ENCODE measurements at regions of chr14 and their contacts with region 1.

Region 1: DNA sequence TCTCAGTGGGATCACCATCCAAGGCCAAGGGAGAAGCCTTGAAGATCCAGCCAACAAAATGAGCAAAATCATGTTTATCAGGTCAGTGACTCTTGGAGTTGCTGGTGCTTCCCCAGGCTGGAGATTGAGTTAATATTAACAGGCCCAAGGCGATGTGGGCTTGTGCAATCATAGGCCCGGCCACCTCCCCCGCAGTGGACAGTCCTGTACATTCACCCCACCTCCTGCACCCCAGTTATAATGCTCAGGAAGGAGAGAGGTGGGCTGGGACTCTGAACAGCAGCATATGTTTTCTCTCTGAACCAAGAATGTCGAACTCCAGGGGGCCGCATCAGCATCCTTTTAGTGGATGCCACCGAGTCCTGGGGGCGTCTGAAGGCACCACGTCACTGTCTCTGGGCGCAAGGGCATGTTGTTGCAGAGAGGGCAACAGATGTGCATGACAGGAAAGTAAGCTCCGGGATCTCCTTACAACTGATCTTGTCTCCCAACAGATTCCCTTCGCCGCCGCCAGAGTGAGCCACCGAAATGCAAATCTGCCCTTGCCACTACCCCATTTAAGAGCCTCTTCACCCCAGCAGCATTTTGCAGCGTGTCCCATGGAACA is 32.2 kb upstream of the SERPINA6 start:
- DNase-seq: peak; percentile 51 to 71 (median 51)
- H3K4me3 ChIP-seq: no peak overlapping the region
- H3K4me3 Mint-ChIP-seq: peak overlapping the region in 1 of 2 donors; percentile 14
- H3K27ac ChIP-seq: no peak overlapping the region
- H3K27ac Mint-ChIP-seq: peak overlapping the region in 1 of 7 donors; percentile 5
- H3K4me1 ChIP-seq: peaks cover 0 to 2% of the 10 kb centered on the region in 2 donors
- H3K4me1 Mint-ChIP-seq: peaks cover 8% of the 10 kb centered on the region
- H3K27me3 ChIP-seq: peaks cover 21 to 23% of the 10 kb centered on the region in 2 donors
- H3K27me3 Mint-ChIP-seq: peaks cover 15 to 32% (median 19%) of the 10 kb centered on the region in 3 donors
- CTCF ChIP-seq: peak; percentile 80

Region 2: GRCh38 chr14:93619176-93619793 is 736.0 kb before region 1 on chr14:
- intact Hi-C with region 1: no loop called
- DNase-seq: peak; percentile 6 to 28 (median 20)
- H3K4me3 ChIP-seq: no peak overlapping the region
- H3K4me3 Mint-ChIP-seq: no peak overlapping the region
- H3K27ac ChIP-seq: no peak overlapping the region
- H3K27ac Mint-ChIP-seq: no peak overlapping the region
- H3K4me1 ChIP-seq: no peaks in the 10 kb centered on the region
- H3K4me1 Mint-ChIP-seq: no peaks in the 10 kb centered on the region
- H3K27me3 ChIP-seq: no peaks in the 10 kb centered on the region
- H3K27me3 Mint-ChIP-seq: peaks cover 0 to 7% (median 7%) of the 10 kb centered on the region in 3 donors
- CTCF ChIP-seq: peak; percentile 68

Region 3: DNA sequence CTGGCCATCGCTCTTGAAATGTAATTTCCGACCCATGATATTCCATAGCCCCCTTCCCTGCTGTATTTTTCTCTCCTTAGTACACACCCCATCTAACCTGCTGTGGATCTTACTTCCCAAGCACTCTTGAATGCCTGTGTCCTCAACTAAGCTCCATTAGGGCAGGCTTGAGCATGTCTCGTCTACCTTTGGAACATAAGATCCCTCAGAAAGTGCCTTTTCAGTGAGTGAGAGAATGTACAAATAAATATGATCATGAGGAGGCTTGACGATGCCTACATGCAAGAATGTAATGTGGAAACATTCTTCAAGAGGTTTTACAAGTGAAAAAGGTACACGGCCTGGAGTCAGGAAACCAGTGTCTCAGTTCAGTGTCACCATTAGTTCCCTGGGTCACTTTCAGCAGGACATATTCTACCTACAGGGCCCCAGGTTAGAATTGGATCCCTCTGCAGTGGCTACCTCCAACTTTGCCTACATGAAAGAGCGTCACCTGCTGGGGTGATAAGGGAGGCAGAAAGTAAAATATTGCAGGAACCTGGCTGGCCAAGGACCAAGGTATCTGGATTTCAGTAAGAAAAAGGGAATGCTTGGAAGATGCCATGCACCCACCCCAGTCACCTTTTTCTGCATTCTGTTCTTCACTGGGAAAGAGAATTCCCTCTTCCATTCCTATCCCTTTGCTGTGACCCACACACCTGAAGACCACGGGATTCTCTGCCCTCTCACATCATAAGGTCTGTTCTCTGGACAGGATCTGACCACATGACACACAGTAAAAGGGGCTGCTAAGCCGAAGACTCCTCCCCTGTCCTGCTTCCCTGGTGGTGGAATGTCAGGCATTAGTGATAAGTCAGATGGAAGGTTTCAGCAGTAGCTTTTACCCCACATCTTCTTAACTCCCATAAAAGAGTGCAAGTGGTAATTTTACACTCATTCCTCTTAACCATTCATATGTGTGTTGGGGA is 57.7 kb after region 1 on chr14:
- intact Hi-C with region 1: loop called (anchors 2 to 5 kb)
- DNase-seq: peak in 2 of 3 donors; percentile 42 to 45
- H3K4me3 ChIP-seq: no peak overlapping the region
- H3K4me3 Mint-ChIP-seq: peak overlapping the region in 1 of 2 donors; percentile 23
- H3K27ac ChIP-seq: no peak overlapping the region
- H3K27ac Mint-ChIP-seq: no peak overlapping the region
- H3K4me1 ChIP-seq: peaks cover 16 to 20% of the 10 kb centered on the region in 2 donors
- H3K4me1 Mint-ChIP-seq: peaks cover 18% of the 10 kb centered on the region
- H3K27me3 ChIP-seq: peaks cover 0 to 9% of the 10 kb centered on the region in 2 donors
- H3K27me3 Mint-ChIP-seq: peaks cover 8 to 10% (median 9%) of the 10 kb centered on the region in 3 donors
- CTCF ChIP-seq: peak; percentile 73

Region 4: DNA sequence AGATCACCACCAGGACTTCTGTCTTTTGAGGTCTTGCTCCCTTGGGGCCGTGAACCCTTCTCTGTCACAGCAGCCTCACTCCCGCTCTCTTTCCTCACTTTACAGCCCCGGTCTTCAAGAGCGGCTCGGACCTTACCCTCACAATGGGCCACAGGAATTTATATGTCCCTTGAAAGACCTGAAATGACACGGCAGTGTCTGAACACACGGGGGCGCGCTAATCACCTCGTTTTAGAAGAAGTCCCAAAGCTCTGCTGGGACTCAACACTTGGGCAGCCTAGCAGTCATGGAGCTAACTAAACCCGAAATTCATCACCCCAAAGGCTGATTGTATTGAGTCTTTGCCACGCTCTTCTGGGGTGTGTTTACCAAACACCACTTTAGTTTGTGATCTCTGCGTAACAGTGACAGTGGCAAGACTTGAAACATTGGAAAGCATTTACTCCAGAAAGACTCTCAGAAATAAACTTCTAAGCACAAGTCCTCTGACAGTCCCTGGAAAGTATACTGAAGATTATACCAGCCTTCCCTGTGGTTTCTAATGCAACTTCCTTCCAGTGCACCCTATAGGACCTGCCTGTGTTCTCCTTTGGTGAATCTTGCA is 68.3 kb after region 1 on chr14:
- intact Hi-C with region 1: loop called in 1 of 2 experiments (anchors 5 kb)
- DNase-seq: peak; percentile 56 to 74 (median 71)
- H3K4me3 ChIP-seq: peak overlapping the region in 1 of 3 experiments; percentile 19
- H3K4me3 Mint-ChIP-seq: peak overlapping the region; percentile 64 to 85
- H3K27ac ChIP-seq: no peak overlapping the region
- H3K27ac Mint-ChIP-seq: peak overlapping the region in 4 of 7 donors; percentile 33 to 71 (median 56)
- H3K4me1 ChIP-seq: peaks cover 11 to 14% of the 10 kb centered on the region in 2 donors
- H3K4me1 Mint-ChIP-seq: peaks cover 24% of the 10 kb centered on the region
- H3K27me3 ChIP-seq: peaks cover 4 to 31% of the 10 kb centered on the region in 2 donors
- H3K27me3 Mint-ChIP-seq: peaks cover 17 to 25% (median 22%) of the 10 kb centered on the region in 3 donors
- CTCF ChIP-seq: peak; percentile 73

Region 5: GRCh38 chr14:94485944-94486841 is 130.9 kb after region 1 on chr14:
- intact Hi-C with region 1: loop called (anchors 2 to 5 kb)
- DNase-seq: peak; percentile 24 to 57 (median 34)
- H3K4me3 ChIP-seq: no peak overlapping the region
- H3K4me3 Mint-ChIP-seq: no peak overlapping the region
- H3K27ac ChIP-seq: no peak overlapping the region
- H3K27ac Mint-ChIP-seq: peak overlapping the region in 1 of 7 donors; percentile 32
- H3K4me1 ChIP-seq: no peaks in the 10 kb centered on the region
- H3K4me1 Mint-ChIP-seq: peaks cover 3% of the 10 kb centered on the region
- H3K27me3 ChIP-seq: peaks cover 0 to 6% of the 10 kb centered on the region in 2 donors
- H3K27me3 Mint-ChIP-seq: peaks cover 8 to 16% (median 11%) of the 10 kb centered on the region in 3 donors
- CTCF ChIP-seq: peak; percentile 99